ENCODE measurements at regions of chr9 and their contacts with region 1.

Region 1: GRCh38 chr9:133335878-133336811 is at the start of gene SURF6:
- DNase-seq: peak; percentile 97
- H3K4me3 ChIP-seq: peak within 1 kb of the TSS; percentile 61
- H3K27ac ChIP-seq: peak within 1 kb of the TSS; percentile 73
- H3K4me1 ChIP-seq: peaks cover 14% of the 10 kb centered on the region
- H3K27me3 ChIP-seq: no peaks in the 10 kb centered on the region
- CTCF ChIP-seq: no peak
- total RNA-seq, gene SURF6: 34.7 and 36.6 TPM in 2 replicates

Region 2: DNA sequence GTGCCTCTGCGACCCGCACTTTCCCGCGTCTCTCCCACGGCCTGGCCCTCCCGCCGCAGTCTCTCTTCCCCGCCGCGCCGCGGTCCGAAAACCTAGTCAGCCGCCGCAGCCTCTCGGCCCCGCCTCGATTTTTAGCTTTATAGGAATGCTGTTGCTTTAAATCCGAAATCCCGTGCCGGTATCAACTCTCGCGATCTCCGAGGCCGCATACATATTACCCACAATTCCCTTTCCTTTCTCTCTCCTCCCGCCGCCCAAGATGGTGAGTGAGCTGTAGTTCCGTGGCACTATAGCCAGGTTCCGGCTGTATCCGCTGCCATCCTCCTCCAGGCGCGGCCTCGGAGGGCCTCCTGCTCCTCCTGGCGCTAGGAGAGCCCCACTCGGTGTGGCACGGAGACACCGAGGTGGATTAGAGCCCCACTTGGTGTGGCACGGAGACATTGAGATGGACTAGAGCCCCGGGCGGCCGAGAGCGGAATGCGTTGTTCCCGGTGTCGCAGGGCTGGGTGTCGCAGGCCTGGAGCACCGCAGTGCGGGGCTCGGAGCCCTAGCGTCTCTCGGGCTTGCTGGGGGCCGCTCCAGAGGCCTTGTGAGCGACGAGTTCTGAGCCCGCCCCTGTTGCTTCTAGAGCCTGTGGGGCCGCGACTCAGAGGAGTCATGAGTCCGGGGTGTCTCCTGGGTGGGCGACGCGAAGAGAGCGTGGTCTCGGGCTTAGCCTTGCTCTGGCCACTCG is 12.0 kb after region 1 on chr9 and contains the starts of genes MED22 and RPL7A:
- CTCF ChIA-PET with region 1: no interaction called
- POLR2A ChIA-PET with region 1: no interaction called
- intact Hi-C with region 1: loop called (anchors 1 kb)
- DNase-seq: peak; percentile 97
- H3K4me3 ChIP-seq: peak within 1 kb of the TSS; percentile 98
- H3K27ac ChIP-seq: peak within 1 kb of the TSS; percentile 99
- H3K4me1 ChIP-seq: peaks cover 19% of the 10 kb centered on the region
- H3K27me3 ChIP-seq: no peaks in the 10 kb centered on the region
- CTCF ChIP-seq: no peak
- total RNA-seq, gene MED22: 46.2 and 49.6 TPM in 2 replicates
- total RNA-seq, gene RPL7A: 1,920 and 1,940 TPM in 2 replicates